ENCODE measurements at regions of chr14 and their contacts with region 1.

Region 1: DNA sequence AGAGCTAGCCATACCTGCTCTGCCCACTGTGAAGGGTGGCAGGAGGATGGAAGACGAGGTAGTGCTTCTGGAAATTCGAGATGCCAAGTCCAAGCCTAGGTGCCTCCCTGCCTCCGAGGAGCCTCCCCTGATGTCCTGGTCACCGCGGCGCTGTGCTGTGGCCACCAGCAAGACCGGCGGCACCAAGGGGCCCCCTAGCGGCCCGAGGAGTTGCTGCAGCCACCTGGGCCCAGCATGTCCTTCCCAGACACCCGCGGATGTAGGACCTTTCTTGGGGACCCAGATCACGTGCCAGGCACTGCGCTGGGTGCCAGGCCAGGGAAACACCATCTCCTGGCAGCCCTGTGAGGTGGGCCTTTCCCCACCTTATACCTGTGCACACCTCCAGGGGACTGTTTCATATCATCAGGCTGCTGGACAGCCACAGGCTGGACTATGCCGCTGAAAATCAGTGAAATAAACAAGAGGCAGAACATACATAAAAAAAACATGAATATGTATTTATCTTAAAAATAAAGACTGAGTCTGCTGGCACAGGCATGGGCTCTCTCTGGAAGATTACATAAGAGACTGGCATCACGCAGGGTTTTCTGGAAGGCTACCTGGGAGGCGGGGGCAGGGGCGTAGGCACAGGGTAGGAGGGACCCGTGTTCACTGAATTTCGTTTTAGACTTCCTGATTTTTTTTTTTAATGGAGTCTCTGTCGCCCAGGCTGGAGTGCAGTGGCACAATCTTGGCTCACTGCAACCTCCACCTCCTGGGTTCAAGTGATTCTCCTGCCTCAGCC is 15.9 kb upstream of the HHIPL1 start:
- DNase-seq: peak; percentile 80 to 89
- ATAC-seq: peak; percentile 91 to 97
- H3K4me3 ChIP-seq: no peak overlapping the region
- H3K27ac ChIP-seq: peak overlapping the region in 1 of 2 experiments; percentile 64; a peak in 2 of 6 replicates
- H3K4me1 ChIP-seq: 0 out of 3 replicates have a peak, but pooled peaks cover 3% of the 10 kb centered on the region
- CTCF ChIP-seq: peak; percentile 96
- EP300 ChIP-seq: no peak
- POLR2A ChIP-seq: no peak
- RAD21 ChIP-seq: peak; percentile 96 to 98

Region 2: DNA sequence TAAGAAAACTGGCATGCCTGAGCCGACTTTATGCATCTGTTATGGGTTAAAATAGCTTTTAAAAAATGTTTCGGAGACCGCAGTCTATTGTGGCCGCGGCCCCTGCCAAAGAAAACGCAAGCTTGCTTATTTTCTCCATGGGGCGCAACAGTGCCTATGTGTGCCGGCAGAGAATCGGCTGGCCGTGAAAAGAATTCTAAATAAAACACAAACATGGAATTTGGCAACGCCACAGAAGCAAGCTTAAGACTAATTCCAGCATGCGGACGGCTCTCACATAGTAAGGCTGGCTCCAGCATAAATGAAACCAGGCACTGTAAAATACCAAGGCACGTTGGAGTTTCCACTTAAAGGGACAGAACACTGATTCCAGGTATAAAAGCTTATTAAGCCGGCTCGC is 413.7 kb before region 1 on chr14:
- CTCF ChIA-PET with region 1: no interaction called
- POLR2A ChIA-PET with region 1: no interaction called
- DNase-seq: no peak
- ATAC-seq: no peak
- H3K4me3 ChIP-seq: no peak overlapping the region
- H3K27ac ChIP-seq: no peak overlapping the region
- H3K4me1 ChIP-seq: no peaks in the 10 kb centered on the region
- CTCF ChIP-seq: no peak
- EP300 ChIP-seq: no peak
- POLR2A ChIP-seq: no peak
- RAD21 ChIP-seq: no peak

Region 3: GRCh38 chr14:99518441-99519346 is 110.3 kb before region 1 on chr14:
- CTCF ChIA-PET with region 1: interaction called, 105 read pairs
- POLR2A ChIA-PET with region 1: no interaction called
- DNase-seq: peak; percentile 70 to 81
- ATAC-seq: peak; percentile 51 to 70; a peak in 5 of 6 replicates
- H3K4me3 ChIP-seq: no peak overlapping the region
- H3K27ac ChIP-seq: peak overlapping the region; percentile 16 to 58; a peak in 4 of 6 replicates
- H3K4me1 ChIP-seq: peaks cover 25% of the 10 kb centered on the region
- CTCF ChIP-seq: peak; percentile 91
- EP300 ChIP-seq: no peak
- POLR2A ChIP-seq: no peak
- RAD21 ChIP-seq: peak; percentile 96

Region 4: GRCh38 chr14:99563233-99564129 is 65.5 kb before region 1 on chr14:
- CTCF ChIA-PET with region 1: interaction called, 23 read pairs
- POLR2A ChIA-PET with region 1: no interaction called
- DNase-seq: peak; percentile 76 to 86
- ATAC-seq: peak; percentile 93 to 98
- H3K4me3 ChIP-seq: no peak overlapping the region
- H3K27ac ChIP-seq: peak overlapping the region; percentile 37 to 92; a peak in 4 of 6 replicates
- H3K4me1 ChIP-seq: peaks cover 72% of the 10 kb centered on the region
- CTCF ChIP-seq: peak; percentile 67
- EP300 ChIP-seq: no peak
- POLR2A ChIP-seq: no peak
- RAD21 ChIP-seq: peak; percentile 74 to 81

Region 5: DNA sequence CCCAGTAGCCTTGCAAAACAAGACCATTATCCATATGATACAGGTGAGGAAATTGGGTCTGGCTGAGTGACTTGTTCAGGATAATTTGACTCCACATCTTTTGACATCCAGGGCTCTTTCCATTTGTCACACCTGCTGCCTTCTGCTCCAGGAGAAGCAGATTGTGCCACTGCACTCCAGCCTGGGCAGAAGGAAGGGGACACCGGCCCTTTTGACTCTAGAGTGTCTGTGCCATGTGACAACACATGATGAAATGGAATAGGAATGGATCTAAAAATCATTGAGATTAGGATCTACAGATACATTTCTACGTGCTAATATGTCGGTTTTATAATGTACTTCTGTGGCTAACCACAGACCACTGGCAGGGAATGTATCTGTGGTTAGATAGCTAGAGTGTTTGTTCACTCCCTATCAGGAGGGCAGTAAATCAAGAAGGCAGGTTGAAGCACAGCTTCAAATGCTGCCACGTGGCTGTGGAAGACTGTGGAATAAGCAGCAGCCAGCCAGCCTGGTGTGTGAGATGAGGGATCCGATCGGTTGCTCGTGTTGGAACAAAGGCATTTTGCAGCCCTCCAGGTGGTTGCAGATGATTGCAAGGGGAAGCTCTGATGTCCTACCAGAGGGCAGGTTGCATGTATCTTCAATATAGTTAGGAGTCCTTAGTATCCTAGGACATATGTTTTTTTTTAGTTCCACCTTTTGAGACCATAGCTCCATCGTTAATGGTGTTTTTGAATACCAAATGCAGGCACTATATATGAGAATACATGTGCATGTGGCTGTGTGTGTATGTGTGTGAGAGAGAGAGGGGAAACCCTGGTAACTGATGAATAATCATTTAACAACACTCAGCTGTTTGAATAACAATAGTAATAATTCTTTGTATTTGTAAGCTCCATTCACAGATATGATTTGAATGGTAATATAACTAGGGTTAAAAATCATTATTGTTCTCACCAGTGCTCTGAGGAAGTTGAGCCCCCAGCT is 192.8 kb after region 1 on chr14:
- CTCF ChIA-PET with region 1: no interaction called
- POLR2A ChIA-PET with region 1: no interaction called
- DNase-seq: no peak
- ATAC-seq: no peak; a peak in 1 of 6 replicates
- H3K4me3 ChIP-seq: no peak overlapping the region
- H3K27ac ChIP-seq: no peak overlapping the region
- H3K4me1 ChIP-seq: no peaks in the 10 kb centered on the region
- CTCF ChIP-seq: no peak
- EP300 ChIP-seq: no peak
- POLR2A ChIP-seq: no peak
- RAD21 ChIP-seq: no peak